ENCODE measurements at regions of chr9 and their contacts with region 1.

Region 1: DNA sequence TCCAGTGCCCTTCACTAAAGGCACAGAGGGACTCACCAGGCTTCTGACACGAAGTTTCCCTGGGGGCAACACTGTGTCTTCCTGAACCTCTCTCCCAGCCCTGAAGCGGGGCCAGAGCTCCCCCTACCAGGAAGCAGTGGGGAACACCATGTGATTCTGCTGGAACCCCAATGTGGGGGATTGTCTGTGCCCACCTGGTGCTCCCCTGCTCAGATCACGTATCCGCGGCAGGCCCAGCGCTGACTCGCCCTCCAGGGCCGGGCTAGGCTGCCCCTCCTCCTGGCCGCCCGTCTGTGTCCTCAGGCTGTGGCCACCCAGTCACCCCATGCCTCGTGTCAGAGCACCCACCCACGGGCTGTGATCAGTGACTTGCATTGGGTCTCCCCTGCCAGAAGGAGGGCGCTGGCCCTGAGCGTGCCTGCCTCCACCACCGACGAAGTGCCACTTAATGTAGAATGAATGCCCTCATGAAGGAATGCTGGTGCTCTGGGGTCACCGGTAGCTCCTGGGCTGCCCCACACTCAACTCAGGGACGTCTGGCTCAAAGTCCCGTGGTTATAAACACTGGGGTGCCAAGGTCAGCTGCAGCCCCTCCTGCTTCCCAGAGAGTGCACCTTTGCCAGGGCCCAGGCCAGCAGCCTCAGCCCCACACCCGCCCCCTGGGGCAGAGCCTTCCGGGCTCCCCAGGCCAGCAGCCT is 22.1 kb downstream of the SARDH start:
- DNase-seq: peak; percentile 65
- ATAC-seq: peak; percentile 60

Region 2: GRCh38 chr9:133532937-133533668 is 182.9 kb before region 1 on chr9:
- intact Hi-C with region 1: loop called (anchors 10 kb)
- DNase-seq: peak; percentile 75
- ATAC-seq: peak; percentile 50

Measured in sciatic nerve (tissue), 2 donors.